Activated CD8-positive, alpha-beta T cell treated with anti-CD3 and anti-CD28 coated beads for 36 hours (primary cell): ENCODE measurements at regions of chr16 and their contacts with region 1.

Region 1: GRCh38 chr16:67816240-67817031 is 9.7 kb downstream of the TSNAXIP1 start:
- DNase-seq: peak; percentile 90
- ATAC-seq: peak; percentile 99
- H3K4me3 Mint-ChIP-seq: peak overlapping the region; percentile 29
- H3K27ac Mint-ChIP-seq: no peak overlapping the region
- H3K4me1 Mint-ChIP-seq: peaks cover 5% of the 10 kb centered on the region
- H3K27me3 Mint-ChIP-seq: no peaks in the 10 kb centered on the region
- CTCF ChIP-seq: peak; percentile 100

Region 2: GRCh38 chr16:67595033-67595355 is 221.4 kb before region 1 on chr16:
- CTCF ChIA-PET with region 1: no interaction called
- POLR2A ChIA-PET with region 1: no interaction called
- intact Hi-C with region 1: no loop called
- DNase-seq: peak; percentile 21
- ATAC-seq: no peak
- H3K4me3 Mint-ChIP-seq: no peak overlapping the region
- H3K27ac Mint-ChIP-seq: peak overlapping the region; percentile 61
- H3K4me1 Mint-ChIP-seq: peaks cover 39% of the 10 kb centered on the region
- H3K27me3 Mint-ChIP-seq: no peaks in the 10 kb centered on the region
- CTCF ChIP-seq: no peak

Region 3: GRCh38 chr16:67672739-67673662 is 143.4 kb before region 1 on chr16:
- CTCF ChIA-PET with region 1: interaction called, 11 read pairs
- POLR2A ChIA-PET with region 1: no interaction called
- intact Hi-C with region 1: no loop called
- DNase-seq: peak; percentile 71
- ATAC-seq: no peak
- H3K4me3 Mint-ChIP-seq: no peak overlapping the region
- H3K27ac Mint-ChIP-seq: no peak overlapping the region
- H3K4me1 Mint-ChIP-seq: no peaks in the 10 kb centered on the region
- H3K27me3 Mint-ChIP-seq: no peaks in the 10 kb centered on the region
- CTCF ChIP-seq: peak; percentile 69

Region 4: DNA sequence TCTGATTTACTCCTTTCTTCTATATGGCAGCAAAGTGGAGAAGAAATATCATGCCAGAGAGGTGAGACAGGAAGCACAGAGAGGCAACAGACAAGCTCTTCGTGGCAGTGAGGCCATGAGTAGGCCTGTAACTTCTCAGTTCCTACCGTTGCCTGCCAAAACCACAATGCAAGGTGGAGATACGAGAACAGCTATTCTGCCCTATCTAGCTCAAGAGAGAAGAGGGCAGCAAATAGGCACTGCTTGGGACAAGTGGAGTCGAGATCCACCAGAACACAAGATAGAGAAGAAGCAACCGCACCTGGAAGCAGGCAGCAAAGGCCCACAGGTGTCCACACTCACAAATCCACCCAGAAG is 34.9 kb before region 1 on chr16:
- CTCF ChIA-PET with region 1: interaction called, 17 read pairs
- POLR2A ChIA-PET with region 1: no interaction called
- intact Hi-C with region 1: no loop called
- DNase-seq: peak; percentile 38
- ATAC-seq: peak; percentile 88
- H3K4me3 Mint-ChIP-seq: no peak overlapping the region
- H3K27ac Mint-ChIP-seq: peak overlapping the region; percentile 81
- H3K4me1 Mint-ChIP-seq: peaks cover 30% of the 10 kb centered on the region
- H3K27me3 Mint-ChIP-seq: no peaks in the 10 kb centered on the region
- CTCF ChIP-seq: no peak

Region 5: DNA sequence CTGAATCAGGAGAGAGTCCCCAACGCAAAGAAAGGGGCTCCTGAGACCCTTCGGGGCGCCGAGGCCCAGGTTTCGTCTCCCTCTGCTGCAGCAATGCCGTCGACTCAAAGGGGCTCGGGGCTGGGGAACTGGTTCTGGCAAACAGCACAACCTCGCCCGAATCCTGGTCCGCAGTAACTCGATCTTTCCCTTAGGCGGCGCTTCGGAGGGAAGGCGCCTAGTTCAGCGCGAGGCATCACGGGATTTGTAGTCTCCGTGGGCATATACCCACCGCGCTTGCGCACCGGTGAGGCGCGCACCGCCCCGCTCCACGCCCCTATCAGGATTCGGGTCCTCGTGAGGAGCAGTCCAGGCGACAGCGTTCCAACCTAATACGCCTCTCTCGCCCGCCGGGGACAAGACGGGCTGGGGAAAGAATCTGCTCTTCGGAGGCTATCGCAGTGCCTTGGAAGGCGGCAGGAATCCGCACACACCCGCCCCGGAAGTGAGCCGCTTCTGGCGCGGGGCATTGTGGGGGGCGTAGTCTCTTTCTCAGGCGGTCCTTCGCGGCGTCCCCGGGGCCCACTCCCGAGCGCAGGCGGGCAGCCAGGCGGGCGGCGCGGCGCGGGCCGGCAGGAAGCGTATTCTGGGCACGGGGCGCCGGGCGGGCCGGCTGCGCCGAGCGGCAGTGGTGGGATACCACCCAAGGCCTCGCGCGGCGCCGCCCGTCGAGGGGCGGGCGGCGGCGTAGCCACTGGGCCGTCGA is 25.5 kb after region 1 on chr16 and contains the start of gene THAP11:
- CTCF ChIA-PET with region 1: interaction called, 30 read pairs
- POLR2A ChIA-PET with region 1: no interaction called
- intact Hi-C with region 1: no loop called
- DNase-seq: peak; percentile 96
- ATAC-seq: peak; percentile 68
- H3K4me3 Mint-ChIP-seq: peak within 1 kb of the TSS; percentile 97
- H3K27ac Mint-ChIP-seq: peak within 1 kb of the TSS; percentile 96
- H3K4me1 Mint-ChIP-seq: peaks cover 28% of the 10 kb centered on the region
- H3K27me3 Mint-ChIP-seq: no peaks in the 10 kb centered on the region
- CTCF ChIP-seq: peak; percentile 84
- total RNA-seq, gene THAP11: 40.6 to 40.7 TPM

Region 6: DNA sequence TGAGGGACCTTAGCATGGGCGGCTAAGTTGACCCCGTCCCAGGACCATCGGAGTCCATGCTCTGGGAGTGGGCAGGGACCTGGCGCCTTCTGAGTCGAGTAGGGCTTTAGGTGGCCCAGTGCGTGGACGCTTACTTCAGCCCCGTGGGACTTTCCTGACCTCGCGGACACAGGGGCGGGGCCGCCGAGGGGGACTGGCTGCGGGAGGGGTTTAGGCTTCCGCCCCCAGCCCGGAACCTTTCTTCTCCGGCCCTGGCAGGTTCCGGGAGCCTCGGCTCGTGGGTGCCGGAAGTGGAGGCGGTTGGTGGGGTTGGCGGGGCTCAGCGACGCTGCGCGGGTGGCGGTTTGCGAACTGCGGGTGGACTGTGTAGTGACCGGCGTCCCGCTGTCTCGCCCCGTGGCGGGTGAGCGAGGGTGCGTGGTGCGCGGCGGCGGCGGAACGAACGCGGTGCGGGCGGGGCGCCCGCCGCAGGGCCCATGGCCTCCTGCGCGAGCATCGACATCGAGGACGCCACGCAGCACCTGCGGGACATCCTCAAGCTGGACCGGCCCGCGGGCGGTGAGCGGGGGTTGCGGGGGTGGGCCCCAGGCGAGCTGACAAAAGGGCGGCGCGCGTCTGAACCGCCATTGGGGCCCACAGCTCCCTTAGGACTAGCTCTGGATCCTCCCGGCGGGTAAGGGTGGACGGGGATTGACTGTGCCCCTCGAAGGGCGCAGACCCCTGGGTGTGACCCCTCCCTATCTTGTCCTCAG is 56.5 kb after region 1 on chr16 and contains the start of gene EDC4:
- CTCF ChIA-PET with region 1: interaction called, 13 read pairs
- POLR2A ChIA-PET with region 1: no interaction called
- intact Hi-C with region 1: no loop called
- DNase-seq: peak; percentile 89
- ATAC-seq: peak; percentile 90
- H3K4me3 Mint-ChIP-seq: peak within 1 kb of the TSS; percentile 82
- H3K27ac Mint-ChIP-seq: peak within 1 kb of the TSS; percentile 93
- H3K4me1 Mint-ChIP-seq: peaks cover 27% of the 10 kb centered on the region
- H3K27me3 Mint-ChIP-seq: no peaks in the 10 kb centered on the region
- CTCF ChIP-seq: no peak
- total RNA-seq, gene EDC4: 78.7 to 90.9 TPM

Region 7: DNA sequence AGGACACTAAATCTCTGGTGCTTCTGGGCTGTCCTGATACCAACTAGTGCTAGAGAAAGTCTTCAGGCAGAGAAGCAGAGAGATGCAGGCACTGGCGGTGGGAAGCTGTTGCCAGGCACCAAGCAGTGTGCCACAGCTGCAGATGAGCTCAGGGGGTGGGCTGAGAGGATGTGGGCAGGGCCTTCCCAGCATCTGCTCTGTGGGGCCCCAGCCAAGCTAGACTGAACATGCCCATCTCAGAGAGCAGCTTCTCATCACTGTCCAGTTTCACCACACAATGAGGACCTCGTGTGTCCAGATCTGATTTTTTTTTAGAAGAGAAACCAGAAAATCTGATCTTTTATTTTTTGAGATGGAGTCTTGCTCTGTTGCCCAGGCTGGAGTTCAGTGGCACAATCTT is 93.7 kb after region 1 on chr16:
- CTCF ChIA-PET with region 1: interaction called, 12 read pairs
- POLR2A ChIA-PET with region 1: no interaction called
- intact Hi-C with region 1: no loop called
- DNase-seq: peak; percentile 72
- ATAC-seq: peak; percentile 99
- H3K4me3 Mint-ChIP-seq: no peak overlapping the region
- H3K27ac Mint-ChIP-seq: peak overlapping the region; percentile 34
- H3K4me1 Mint-ChIP-seq: peaks cover 22% of the 10 kb centered on the region
- H3K27me3 Mint-ChIP-seq: no peaks in the 10 kb centered on the region
- CTCF ChIP-seq: no peak

Region 8: DNA sequence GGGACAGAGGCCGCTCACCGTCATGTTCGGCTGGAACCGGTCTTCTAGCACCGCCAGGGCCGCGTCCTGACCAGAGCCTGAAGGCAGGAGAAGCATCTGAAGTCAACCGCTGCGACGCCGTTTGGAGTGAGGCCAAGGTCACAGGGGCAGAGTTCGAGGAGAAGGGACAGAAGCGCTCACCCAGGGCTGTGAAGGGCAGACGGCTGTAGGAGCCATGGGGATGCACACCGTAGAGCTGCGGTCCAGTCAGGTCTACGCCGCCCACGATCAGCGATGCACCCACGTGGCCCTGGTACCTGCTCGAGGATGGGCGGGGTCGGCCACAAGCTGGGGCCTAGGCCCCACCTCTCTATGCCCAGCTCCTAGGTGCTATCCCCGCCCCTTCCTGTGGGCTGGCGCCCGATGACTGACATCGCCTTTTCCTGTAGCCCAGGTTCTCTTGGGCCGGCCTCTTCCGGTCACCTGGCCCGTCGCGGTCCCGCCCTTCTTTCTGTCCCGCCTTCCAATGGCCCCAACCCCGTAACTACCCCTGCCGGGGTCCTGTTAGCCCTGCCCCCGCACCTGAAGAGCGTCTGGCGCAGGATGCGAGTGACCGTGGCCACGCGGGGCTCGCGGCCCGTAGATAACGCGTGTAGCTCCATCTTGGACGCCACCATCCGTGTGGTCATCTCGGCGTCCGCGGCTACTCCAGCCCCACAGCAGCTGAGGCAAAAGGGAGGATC is 119.1 kb after region 1 on chr16:
- CTCF ChIA-PET with region 1: interaction called, 28 read pairs
- POLR2A ChIA-PET with region 1: interaction called, 4 read pairs
- intact Hi-C with region 1: no loop called
- DNase-seq: peak; percentile 99
- ATAC-seq: peak; percentile 92
- H3K4me3 Mint-ChIP-seq: peak overlapping the region; percentile 97
- H3K27ac Mint-ChIP-seq: peak overlapping the region; percentile 100
- H3K4me1 Mint-ChIP-seq: peaks cover 42% of the 10 kb centered on the region
- H3K27me3 Mint-ChIP-seq: no peaks in the 10 kb centered on the region
- CTCF ChIP-seq: no peak